Gastrocnemius medialis (tissue), 4 donors: ENCODE measurements at regions of chr15 and their contacts with region 1.

Region 1: GRCh38 chr15:44861439-44861910 is 95.0 kb upstream of the TERB2 start:
- DNase-seq: no peak
- ATAC-seq: no peak
- H3K4me3 ChIP-seq: no peak overlapping the region
- H3K27ac ChIP-seq: no peak overlapping the region
- H3K4me1 ChIP-seq: no peaks in the 10 kb centered on the region
- H3K27me3 ChIP-seq: no peaks in the 10 kb centered on the region
- CTCF ChIP-seq: no peak
- POLR2A ChIP-seq: no peak

Region 2: DNA sequence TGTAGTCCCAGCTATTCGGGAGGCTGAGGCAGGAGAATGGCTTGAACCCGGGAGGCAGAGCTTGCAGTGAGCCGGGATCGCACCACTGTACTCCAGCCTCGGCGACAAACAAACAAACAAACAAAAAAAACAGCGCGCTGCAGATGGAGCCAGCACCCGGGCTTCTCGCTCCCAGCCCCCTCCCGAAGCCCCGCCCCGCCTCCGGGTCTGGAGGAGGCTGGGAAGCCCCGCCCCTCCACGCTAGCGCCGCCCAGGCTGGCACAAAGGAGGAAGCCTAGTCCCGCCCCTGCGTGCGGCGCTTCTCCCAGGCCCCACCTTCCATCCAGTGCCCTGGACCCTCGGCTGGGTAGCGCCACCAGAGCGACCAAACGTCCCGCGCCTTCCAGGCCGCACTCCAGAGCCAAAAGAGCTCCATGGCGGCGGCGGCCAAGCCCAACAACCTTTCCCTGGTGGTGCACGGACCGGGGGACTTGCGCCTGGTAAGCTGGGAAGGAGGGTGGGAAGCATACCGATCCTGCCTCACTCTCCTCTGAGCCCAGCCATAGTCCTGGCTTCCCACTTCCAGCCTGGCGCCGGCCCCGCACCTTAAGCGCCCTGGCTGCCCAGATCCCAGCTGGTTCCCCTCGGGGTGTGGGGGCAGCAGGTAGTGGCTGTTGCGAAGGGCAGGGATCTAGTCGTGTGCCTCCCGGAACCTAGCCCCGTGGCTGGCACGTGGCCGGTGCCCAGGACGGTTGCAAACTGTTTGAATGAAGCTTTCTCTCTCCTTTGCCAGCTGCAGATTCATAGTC is 161.6 kb after region 1 on chr15 and contains the start of gene SORD:
- in situ Hi-C with region 1: loop called in 1 of 4 experiments (anchors 25 kb)
- intact Hi-C with region 1: loop called (anchors 5 kb)
- DNase-seq: peak; percentile 76 to 80
- ATAC-seq: peak; percentile 90 to 94
- H3K4me3 ChIP-seq: peak within 1 kb of the TSS; percentile 62 to 86 (median 78)
- H3K27ac ChIP-seq: peak within 1 kb of the TSS; percentile 64 to 73 (median 68)
- H3K4me1 ChIP-seq: no peaks in the 10 kb centered on the region
- H3K27me3 ChIP-seq: no peaks in the 10 kb centered on the region
- CTCF ChIP-seq: no peak
- POLR2A ChIP-seq: peak in 1 of 2 donors; percentile 10
- total RNA-seq, gene SORD: 2.6 to 11.6 (median 3.6) TPM

Region 3: DNA sequence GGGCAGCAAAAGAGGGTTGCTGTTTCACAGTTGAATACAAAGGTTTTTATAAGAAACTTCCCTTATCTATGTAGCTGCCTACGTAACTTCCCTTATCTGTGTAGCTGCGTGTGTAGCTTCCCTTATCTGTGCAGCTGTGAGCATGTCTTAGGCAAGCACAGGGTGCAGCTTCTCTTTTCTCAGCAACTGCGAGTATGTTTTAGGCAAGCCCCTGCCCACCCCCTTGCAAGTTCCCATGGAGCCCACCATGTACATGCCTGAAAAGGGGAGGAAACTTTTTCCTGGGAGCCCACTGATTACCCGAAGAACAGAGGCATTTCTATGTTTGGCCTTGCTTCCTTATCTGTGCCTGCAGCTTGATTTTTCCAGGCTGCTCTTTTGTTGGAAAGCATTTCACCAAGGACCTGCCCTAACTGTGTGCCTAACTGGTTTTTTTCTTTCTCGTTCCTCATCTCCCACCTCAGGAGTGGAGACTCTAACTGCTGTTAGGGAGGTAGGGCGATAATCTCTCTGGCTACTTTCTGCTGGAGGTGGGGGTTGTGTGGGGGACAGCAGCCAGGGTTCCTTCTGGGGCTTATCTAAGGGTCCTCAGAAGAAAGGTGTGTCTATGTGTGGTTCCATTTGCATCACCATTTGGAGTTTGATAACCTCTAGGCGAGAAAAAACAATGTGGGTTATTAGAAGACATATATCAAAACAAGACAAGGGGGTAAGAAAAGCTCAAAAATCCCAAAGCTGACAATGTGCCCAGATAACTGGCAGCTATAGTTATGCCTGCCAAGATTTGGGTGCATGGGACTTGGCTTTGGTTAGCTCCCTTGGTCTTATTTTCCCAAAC is 187.5 kb after region 1 on chr15:
- in situ Hi-C with region 1: loop called in 1 of 4 experiments (anchors 25 kb)
- intact Hi-C with region 1: no loop called
- DNase-seq: no peak
- ATAC-seq: no peak
- H3K4me3 ChIP-seq: no peak overlapping the region
- H3K27ac ChIP-seq: no peak overlapping the region
- H3K4me1 ChIP-seq: no peaks in the 10 kb centered on the region
- H3K27me3 ChIP-seq: no peaks in the 10 kb centered on the region
- CTCF ChIP-seq: no peak
- POLR2A ChIP-seq: no peak

Region 4: DNA sequence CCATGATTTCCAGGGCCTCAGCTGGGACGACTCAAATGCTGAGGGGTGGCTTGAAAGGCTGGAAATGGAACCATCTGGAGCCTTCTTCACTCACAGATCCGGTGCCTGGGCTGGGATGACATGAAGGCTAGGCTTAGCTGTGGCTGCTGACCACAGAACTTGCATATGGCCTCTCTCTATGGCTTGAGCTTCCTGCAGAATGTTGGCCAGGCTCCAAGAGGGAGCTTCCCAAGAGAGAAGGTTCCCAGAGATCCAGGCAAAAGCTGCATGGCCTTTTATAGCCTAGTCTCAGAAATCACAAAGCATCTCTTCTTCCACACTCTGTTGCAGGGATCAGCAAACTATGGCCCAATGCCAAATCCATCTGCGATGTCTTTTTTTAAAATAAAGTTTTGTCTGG is 472.1 kb after region 1 on chr15:
- in situ Hi-C with region 1: no loop called
- intact Hi-C with region 1: no loop called
- DNase-seq: peak; percentile 6 to 29
- ATAC-seq: peak; percentile 45 to 55
- H3K4me3 ChIP-seq: no peak overlapping the region
- H3K27ac ChIP-seq: no peak overlapping the region
- H3K4me1 ChIP-seq: no peaks in the 10 kb centered on the region
- H3K27me3 ChIP-seq: no peaks in the 10 kb centered on the region
- CTCF ChIP-seq: no peak
- POLR2A ChIP-seq: no peak